CD8-positive, alpha-beta T cell (primary cell): ENCODE measurements at regions of chr22 and their contacts with region 1.

Region 1: DNA sequence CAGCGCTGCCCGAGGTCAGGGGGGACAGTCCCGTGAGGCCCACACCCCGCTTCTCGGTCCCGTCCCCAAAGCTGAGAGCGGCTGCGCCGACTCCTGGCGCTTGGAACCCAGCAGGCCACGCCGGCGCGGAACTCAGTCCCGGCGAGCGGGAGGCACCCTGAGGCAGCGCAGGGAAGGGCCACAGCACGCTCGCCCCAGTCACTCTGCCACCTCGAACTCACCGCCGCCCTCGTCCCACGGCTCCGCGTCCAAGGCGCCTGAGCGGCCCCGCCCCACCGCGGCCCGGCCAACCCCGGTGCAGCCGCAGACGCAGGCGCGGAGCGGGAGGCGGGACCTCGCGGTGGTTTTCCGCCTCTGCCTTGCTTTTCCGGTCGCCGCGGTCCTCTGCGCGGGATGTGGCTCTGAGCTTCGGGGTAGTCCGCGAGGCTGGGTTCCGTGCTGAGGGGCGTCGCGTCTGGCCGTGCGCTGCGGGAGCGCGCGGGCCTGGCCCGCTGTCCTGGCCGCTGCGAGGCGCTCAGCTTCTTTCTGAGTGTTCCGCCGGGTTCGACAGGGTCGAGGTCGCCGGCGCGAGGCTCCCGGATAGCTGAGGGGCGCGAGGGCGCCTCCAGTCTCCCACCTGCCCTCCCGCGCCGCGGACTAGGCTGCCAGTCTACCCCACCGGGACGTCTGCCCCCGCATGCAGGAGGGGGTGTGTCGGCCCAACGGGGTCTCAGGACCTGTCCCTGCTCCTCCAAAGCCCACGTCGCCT is at the start of gene CDPF1:
- DNase-seq: peak; percentile 74 to 96 (median 91)
- ATAC-seq: peak; percentile 92
- H3K4me3 ChIP-seq: peak within 1 kb of the TSS; percentile 75 to 80
- H3K4me3 Mint-ChIP-seq: peak within 1 kb of the TSS; percentile 82
- H3K27ac ChIP-seq: peak within 1 kb of the TSS; percentile 66 to 70
- H3K27ac Mint-ChIP-seq: peak within 1 kb of the TSS; percentile 82
- H3K4me1 ChIP-seq: peaks cover 21% of the 10 kb centered on the region
- H3K4me1 Mint-ChIP-seq: peaks cover 22% of the 10 kb centered on the region
- H3K27me3 ChIP-seq: no peaks in the 10 kb centered on the region
- H3K27me3 Mint-ChIP-seq: no peaks in the 10 kb centered on the region
- CTCF ChIP-seq: no peak
- total RNA-seq, gene CDPF1: 0.81 to 1.0 TPM

Region 2: DNA sequence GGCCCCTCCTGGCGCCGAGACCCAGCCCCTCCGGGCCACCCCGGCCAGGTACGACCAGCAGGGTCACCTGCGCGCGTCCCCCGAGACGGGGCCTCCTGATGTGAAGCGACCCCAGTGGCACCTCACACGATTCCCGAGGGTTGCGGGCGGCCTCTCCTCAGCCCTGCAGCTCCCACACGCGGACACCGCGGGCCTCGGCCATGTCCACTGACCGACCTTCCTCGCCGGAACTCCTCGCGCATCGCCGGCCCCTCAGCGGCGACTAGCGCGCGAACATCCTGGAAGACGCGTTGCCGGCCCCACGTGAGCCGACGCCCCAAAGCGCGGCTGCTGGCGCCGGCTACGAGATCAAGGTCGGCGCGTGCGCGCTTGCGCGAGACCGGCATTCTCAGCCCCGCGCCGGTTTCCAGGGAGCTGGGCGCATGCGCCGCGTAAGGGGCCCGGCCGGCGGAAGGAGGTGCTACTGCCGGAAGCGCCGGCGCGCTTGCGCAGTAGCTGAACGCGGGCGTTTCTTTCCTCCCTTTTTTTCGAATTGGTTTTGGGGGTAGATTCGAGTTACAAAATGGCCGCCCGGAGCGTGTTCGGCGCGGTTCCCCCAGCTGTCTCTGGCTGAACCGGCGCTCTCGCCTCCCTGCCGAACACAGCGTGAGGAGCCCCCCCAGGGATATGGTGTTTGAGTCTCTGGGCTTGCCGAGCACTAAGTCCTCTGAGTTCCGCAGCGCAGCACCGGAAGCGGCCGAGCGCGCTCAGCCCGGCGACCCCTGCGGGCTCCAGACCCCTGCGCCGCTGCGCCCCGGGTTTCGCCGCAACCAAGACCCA is 1086.5 kb before region 1 on chr22 and contains the start of gene NUP50:
- CTCF ChIA-PET with region 1: no interaction called
- POLR2A ChIA-PET with region 1: no interaction called
- intact Hi-C with region 1: loop called in 1 of 2 experiments (anchors 10 kb)
- DNase-seq: peak; percentile 92 to 99 (median 96)
- ATAC-seq: peak; percentile 83
- H3K4me3 ChIP-seq: peak within 1 kb of the TSS; percentile 86 to 90
- H3K4me3 Mint-ChIP-seq: peak within 1 kb of the TSS; percentile 92
- H3K27ac ChIP-seq: peak within 1 kb of the TSS; percentile 86 to 88
- H3K27ac Mint-ChIP-seq: peak within 1 kb of the TSS; percentile 93
- H3K4me1 ChIP-seq: peaks cover 38% of the 10 kb centered on the region
- H3K4me1 Mint-ChIP-seq: peaks cover 65% of the 10 kb centered on the region
- H3K27me3 ChIP-seq: no peaks in the 10 kb centered on the region
- H3K27me3 Mint-ChIP-seq: no peaks in the 10 kb centered on the region
- CTCF ChIP-seq: no peak
- total RNA-seq, gene NUP50: 133 to 134 TPM

Region 3: GRCh38 chr22:46150034-46150654 is 100.1 kb before region 1 on chr22 and contains the start of gene PPARA:
- CTCF ChIA-PET with region 1: no interaction called
- POLR2A ChIA-PET with region 1: interaction called, 7 read pairs
- intact Hi-C with region 1: loop called (anchors 1 kb)
- DNase-seq: peak; percentile 60 to 93 (median 89)
- ATAC-seq: peak; percentile 77
- H3K4me3 ChIP-seq: peak within 1 kb of the TSS; percentile 82 to 91
- H3K4me3 Mint-ChIP-seq: peak within 1 kb of the TSS; percentile 83
- H3K27ac ChIP-seq: peak within 1 kb of the TSS; percentile 46 to 60
- H3K27ac Mint-ChIP-seq: peak within 1 kb of the TSS; percentile 89
- H3K4me1 ChIP-seq: peaks cover 21% of the 10 kb centered on the region
- H3K4me1 Mint-ChIP-seq: peaks cover 20% of the 10 kb centered on the region
- H3K27me3 ChIP-seq: no peaks in the 10 kb centered on the region
- H3K27me3 Mint-ChIP-seq: no peaks in the 10 kb centered on the region
- CTCF ChIP-seq: no peak
- total RNA-seq, gene PPARA: 4.4 to 6.9 TPM

Region 4: GRCh38 chr22:46267431-46268279 is 17.4 kb after region 1 on chr22 and contains the start of gene TTC38:
- CTCF ChIA-PET with region 1: interaction called, 4 read pairs
- POLR2A ChIA-PET with region 1: no interaction called
- intact Hi-C with region 1: loop called in 1 of 2 experiments (anchors 2 kb)
- DNase-seq: peak in 7 of 9 experiments; percentile 13 to 73 (median 52)
- ATAC-seq: peak; percentile 88
- H3K4me3 ChIP-seq: peak within 1 kb of the TSS; percentile 80 to 83
- H3K4me3 Mint-ChIP-seq: peak within 1 kb of the TSS; percentile 88
- H3K27ac ChIP-seq: peak within 1 kb of the TSS in 1 of 2 experiments; percentile 31
- H3K27ac Mint-ChIP-seq: peak within 1 kb of the TSS; percentile 37
- H3K4me1 ChIP-seq: peaks cover 3% of the 10 kb centered on the region
- H3K4me1 Mint-ChIP-seq: peaks cover 17% of the 10 kb centered on the region
- H3K27me3 ChIP-seq: no peaks in the 10 kb centered on the region
- H3K27me3 Mint-ChIP-seq: peaks cover 14% of the 10 kb centered on the region
- CTCF ChIP-seq: no peak
- total RNA-seq, gene TTC38: 5.9 to 7.9 TPM

Region 5: DNA sequence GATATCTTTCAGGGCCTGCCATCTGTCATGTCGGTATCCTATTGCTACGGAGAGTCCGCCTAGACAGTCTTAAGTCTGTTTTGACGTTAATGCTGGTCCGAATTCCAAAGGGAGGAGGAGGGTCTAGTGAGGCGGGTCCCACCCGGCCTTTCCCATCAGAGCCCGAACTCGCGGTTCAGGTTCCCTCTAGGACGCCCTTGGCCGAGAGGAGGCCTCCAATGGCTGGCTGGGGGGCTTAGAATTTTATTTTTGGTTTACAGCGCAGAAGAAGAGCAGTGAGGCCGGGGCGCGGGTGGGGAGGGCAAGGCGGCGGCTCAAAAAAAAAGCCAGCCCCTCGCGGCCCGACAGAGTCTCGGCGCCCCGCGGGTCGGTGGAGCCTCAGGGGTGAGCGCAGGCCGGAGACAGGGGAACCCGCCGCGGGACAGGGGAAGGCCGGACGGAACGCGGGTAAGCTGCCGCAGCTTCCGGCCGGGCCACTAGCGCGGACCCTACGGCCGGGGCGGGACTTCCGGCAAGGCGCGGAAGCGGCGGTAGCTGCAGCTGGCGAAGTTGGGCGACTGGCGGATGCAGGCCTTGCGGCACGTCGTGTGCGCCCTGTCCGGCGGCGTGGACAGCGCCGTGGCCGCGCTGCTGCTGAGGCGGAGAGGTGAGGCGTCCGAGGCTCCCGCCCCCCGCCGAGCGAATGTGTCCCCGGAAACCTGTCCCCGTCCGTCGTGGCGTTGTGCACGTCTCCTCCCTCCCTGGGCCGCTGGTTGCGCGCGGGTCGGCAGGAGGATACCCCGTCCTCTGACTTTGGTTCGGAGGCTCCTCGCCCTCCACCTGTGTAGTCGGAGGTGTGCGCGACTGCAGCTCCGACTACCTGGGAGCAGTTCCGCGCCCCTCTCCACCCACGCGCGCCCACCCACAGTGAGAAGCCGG is 85.3 kb after region 1 on chr22 and contains the start of gene TRMU:
- CTCF ChIA-PET with region 1: no interaction called
- POLR2A ChIA-PET with region 1: interaction called, 3 read pairs
- intact Hi-C with region 1: loop called (anchors 1 to 2 kb)
- DNase-seq: peak; percentile 29 to 86 (median 75)
- ATAC-seq: peak; percentile 80
- H3K4me3 ChIP-seq: peak within 1 kb of the TSS; percentile 80 to 94
- H3K4me3 Mint-ChIP-seq: peak within 1 kb of the TSS; percentile 95
- H3K27ac ChIP-seq: peak within 1 kb of the TSS; percentile 68 to 86
- H3K27ac Mint-ChIP-seq: peak within 1 kb of the TSS; percentile 91
- H3K4me1 ChIP-seq: peaks cover 16% of the 10 kb centered on the region
- H3K4me1 Mint-ChIP-seq: peaks cover 39% of the 10 kb centered on the region
- H3K27me3 ChIP-seq: no peaks in the 10 kb centered on the region
- H3K27me3 Mint-ChIP-seq: no peaks in the 10 kb centered on the region
- CTCF ChIP-seq: no peak
- total RNA-seq, gene TRMU: 51.0 to 56.3 TPM

Region 6: GRCh38 chr22:46399251-46399999 is 149.2 kb after region 1 on chr22:
- CTCF ChIA-PET with region 1: no interaction called
- POLR2A ChIA-PET with region 1: no interaction called
- intact Hi-C with region 1: no loop called
- DNase-seq: peak in 1 of 9 experiments; percentile 30
- ATAC-seq: no peak
- H3K4me3 ChIP-seq: no peak overlapping the region
- H3K4me3 Mint-ChIP-seq: no peak overlapping the region
- H3K27ac ChIP-seq: no peak overlapping the region
- H3K27ac Mint-ChIP-seq: no peak overlapping the region
- H3K4me1 ChIP-seq: peaks cover 5% of the 10 kb centered on the region
- H3K4me1 Mint-ChIP-seq: peaks cover 19% of the 10 kb centered on the region
- H3K27me3 ChIP-seq: no peaks in the 10 kb centered on the region
- H3K27me3 Mint-ChIP-seq: no peaks in the 10 kb centered on the region
- CTCF ChIP-seq: no peak